ENCODE measurements at regions of chr10 and their contacts with region 1.

Region 1: GRCh38 chr10:30671026-30671616 is 41.6 kb upstream of the LYZL2 start:
- DNase-seq: no peak
- H3K4me3 ChIP-seq: peak overlapping the region; percentile 27 to 54
- H3K27ac ChIP-seq: no peak overlapping the region
- H3K4me1 ChIP-seq: no peaks in the 10 kb centered on the region
- H3K27me3 ChIP-seq: no peaks in the 10 kb centered on the region
- CTCF ChIP-seq: peak; percentile 76 to 83 (median 77)

Region 2: DNA sequence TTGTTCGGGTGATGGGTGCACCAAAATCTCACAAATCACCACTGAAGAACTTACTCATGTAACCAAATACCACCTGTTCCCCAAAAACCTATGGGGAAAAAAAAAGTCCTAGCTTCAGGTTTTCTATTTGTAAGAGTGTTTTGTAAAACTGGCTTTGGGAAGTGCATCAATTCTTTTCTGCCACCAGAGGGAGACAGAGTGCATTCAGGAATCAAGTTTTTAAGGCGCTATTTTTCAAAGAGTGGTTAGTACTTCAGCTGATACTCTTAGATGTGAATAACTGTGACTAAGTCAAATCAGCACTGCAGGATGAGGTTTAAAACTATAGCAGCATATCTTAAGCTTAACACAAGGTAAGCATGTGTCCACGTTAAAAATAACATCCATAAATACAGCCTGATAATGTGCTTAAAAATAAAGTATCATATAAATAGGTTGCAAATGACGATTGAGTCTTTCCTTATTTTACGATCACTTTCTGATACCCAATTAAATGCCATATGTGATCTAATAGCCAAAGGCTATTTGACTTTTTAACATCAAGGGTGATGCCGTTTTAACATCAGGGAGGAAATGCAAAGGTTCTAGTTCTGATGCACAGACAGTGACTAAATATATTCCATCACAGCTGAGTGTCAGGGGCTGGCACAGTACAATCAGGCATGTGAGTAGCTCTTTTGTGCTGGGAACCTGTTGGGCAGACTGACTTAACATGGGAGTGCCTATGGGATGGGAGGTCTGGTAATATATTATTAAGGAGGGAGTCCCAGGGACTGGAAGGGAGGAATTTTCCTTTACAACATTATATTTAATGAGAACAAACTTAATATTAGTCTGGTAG is 31.0 kb before region 1 on chr10:
- intact Hi-C with region 1: loop called (anchors 2 kb)
- DNase-seq: no peak
- H3K4me3 ChIP-seq: no peak overlapping the region
- H3K27ac ChIP-seq: no peak overlapping the region
- H3K4me1 ChIP-seq: peaks cover 0 to 28% of the 10 kb centered on the region in 2 donors
- H3K27me3 ChIP-seq: no peaks in the 10 kb centered on the region
- CTCF ChIP-seq: peak; percentile 79 to 89 (median 84)